ENCODE measurements at regions of chr1 and their contacts with region 1.

Region 1: GRCh38 chr1:54253480-54253879 is 53.5 kb downstream of the MRPL37 start:
- DNase-seq: no peak
- H3K4me3 ChIP-seq: no peak overlapping the region
- H3K4me3 Mint-ChIP-seq: no peak overlapping the region
- H3K27ac ChIP-seq: no peak overlapping the region
- H3K27ac Mint-ChIP-seq: peak overlapping the region in 2 of 8 donors; percentile 26 to 38
- H3K4me1 ChIP-seq: no peaks in the 10 kb centered on the region
- H3K4me1 Mint-ChIP-seq: peaks cover 0 to 18% (median 14%) of the 10 kb centered on the region in 3 donors
- H3K27me3 ChIP-seq: no peaks in the 10 kb centered on the region
- H3K27me3 Mint-ChIP-seq: peaks cover 0 to 1% of the 10 kb centered on the region in 2 donors

Region 2: GRCh38 chr1:53771648-53772047 is 481.8 kb before region 1 on chr1:
- CTCF ChIA-PET with region 1: no interaction called
- POLR2A ChIA-PET with region 1: no interaction called
- DNase-seq: no peak
- H3K4me3 ChIP-seq: no peak overlapping the region
- H3K4me3 Mint-ChIP-seq: no peak overlapping the region
- H3K27ac ChIP-seq: no peak overlapping the region
- H3K27ac Mint-ChIP-seq: peak overlapping the region in 2 of 8 donors; percentile 38 to 57
- H3K4me1 ChIP-seq: no peaks in the 10 kb centered on the region
- H3K4me1 Mint-ChIP-seq: peaks cover 4 to 14% (median 13%) of the 10 kb centered on the region in 3 donors
- H3K27me3 ChIP-seq: no peaks in the 10 kb centered on the region
- H3K27me3 Mint-ChIP-seq: no peaks in the 10 kb centered on the region

Region 3: GRCh38 chr1:54297596-54298283 is 44.3 kb after region 1 on chr1:
- CTCF ChIA-PET with region 1: no interaction called
- POLR2A ChIA-PET with region 1: no interaction called
- DNase-seq: no peak
- H3K4me3 ChIP-seq: no peak overlapping the region
- H3K4me3 Mint-ChIP-seq: no peak overlapping the region
- H3K27ac ChIP-seq: no peak overlapping the region
- H3K27ac Mint-ChIP-seq: peak overlapping the region in 1 of 8 donors; percentile 93
- H3K4me1 ChIP-seq: peaks cover 73% of the 10 kb centered on the region
- H3K4me1 Mint-ChIP-seq: peaks cover 79 to 92% (median 84%) of the 10 kb centered on the region in 3 donors
- H3K27me3 ChIP-seq: no peaks in the 10 kb centered on the region
- H3K27me3 Mint-ChIP-seq: peaks cover 0 to 1% of the 10 kb centered on the region in 2 donors

Region 4: GRCh38 chr1:54406339-54407153 is 153.1 kb after region 1 on chr1 and contains the start of gene SSBP3:
- CTCF ChIA-PET with region 1: no interaction called
- POLR2A ChIA-PET with region 1: interaction called, 13 read pairs
- DNase-seq: peak; percentile 86 to 93 (median 91)
- H3K4me3 ChIP-seq: peak within 1 kb of the TSS; percentile 64
- H3K4me3 Mint-ChIP-seq: peak within 1 kb of the TSS; percentile 95 to 99 (median 97)
- H3K27ac ChIP-seq: peak within 1 kb of the TSS; percentile 84
- H3K27ac Mint-ChIP-seq: peak within 1 kb of the TSS; percentile 91 to 98 (median 94)
- H3K4me1 ChIP-seq: peaks cover 62% of the 10 kb centered on the region
- H3K4me1 Mint-ChIP-seq: peaks cover 59 to 66% (median 61%) of the 10 kb centered on the region in 3 donors
- H3K27me3 ChIP-seq: no peaks in the 10 kb centered on the region
- H3K27me3 Mint-ChIP-seq: peaks cover 0 to 5% of the 10 kb centered on the region in 2 donors
- total RNA-seq, gene SSBP3: 41.6 to 52.7 TPM

Measured in CD8-positive, alpha-beta memory T cell (primary cell).